Activated B cell treated with CpG ODN at 0.5 μM for 24 hours (primary cell): ENCODE measurements at regions of chr2 and their contacts with region 1.

Region 1: GRCh38 chr2:105802587-105802986 is 57.9 kb downstream of the NCK2 start:
- DNase-seq: peak; percentile 41
- ATAC-seq: peak; percentile 87
- H3K4me3 Mint-ChIP-seq: peak overlapping the region; percentile 65
- H3K27ac Mint-ChIP-seq: peak overlapping the region; percentile 90
- H3K4me1 Mint-ChIP-seq: peaks cover 93% of the 10 kb centered on the region
- H3K27me3 Mint-ChIP-seq: no peaks in the 10 kb centered on the region
- CTCF ChIP-seq: no peak

Region 2: GRCh38 chr2:105789745-105790460 is 12.7 kb before region 1 on chr2:
- CTCF ChIA-PET with region 1: interaction called, 4 read pairs
- POLR2A ChIA-PET with region 1: interaction called, 10 read pairs
- intact Hi-C with region 1: loop called (anchors 1 kb)
- DNase-seq: no peak
- ATAC-seq: peak; percentile 81
- H3K4me3 Mint-ChIP-seq: peak overlapping the region; percentile 64
- H3K27ac Mint-ChIP-seq: peak overlapping the region; percentile 84
- H3K4me1 Mint-ChIP-seq: peaks cover 90% of the 10 kb centered on the region
- H3K27me3 Mint-ChIP-seq: no peaks in the 10 kb centered on the region
- CTCF ChIP-seq: no peak

Region 3: DNA sequence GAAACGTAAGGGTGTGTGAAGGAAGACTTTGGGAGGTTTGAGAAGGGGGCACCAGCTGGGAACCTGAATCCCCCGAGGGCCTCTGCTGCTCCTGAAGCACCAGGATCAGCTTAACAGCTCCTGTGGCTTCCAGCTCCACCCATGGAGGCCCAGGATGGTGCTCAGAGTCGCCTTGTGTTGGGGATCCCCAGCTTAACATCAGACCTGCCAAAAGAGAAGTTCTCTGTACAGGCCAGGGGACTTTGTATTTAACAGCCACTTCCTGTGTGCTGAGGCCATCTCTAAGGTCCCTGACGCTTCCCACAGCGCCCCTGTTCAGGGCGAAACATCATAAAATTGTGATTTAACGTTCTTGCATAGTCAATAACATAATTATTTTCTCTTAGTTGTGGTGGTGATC is 19.6 kb after region 1 on chr2:
- CTCF ChIA-PET with region 1: no interaction called
- POLR2A ChIA-PET with region 1: interaction called, 3 read pairs
- intact Hi-C with region 1: loop called (anchors 2 kb)
- DNase-seq: no peak
- ATAC-seq: peak; percentile 84
- H3K4me3 Mint-ChIP-seq: peak overlapping the region; percentile 4
- H3K27ac Mint-ChIP-seq: peak overlapping the region; percentile 70
- H3K4me1 Mint-ChIP-seq: peaks cover 59% of the 10 kb centered on the region
- H3K27me3 Mint-ChIP-seq: no peaks in the 10 kb centered on the region
- CTCF ChIP-seq: no peak

Region 4: DNA sequence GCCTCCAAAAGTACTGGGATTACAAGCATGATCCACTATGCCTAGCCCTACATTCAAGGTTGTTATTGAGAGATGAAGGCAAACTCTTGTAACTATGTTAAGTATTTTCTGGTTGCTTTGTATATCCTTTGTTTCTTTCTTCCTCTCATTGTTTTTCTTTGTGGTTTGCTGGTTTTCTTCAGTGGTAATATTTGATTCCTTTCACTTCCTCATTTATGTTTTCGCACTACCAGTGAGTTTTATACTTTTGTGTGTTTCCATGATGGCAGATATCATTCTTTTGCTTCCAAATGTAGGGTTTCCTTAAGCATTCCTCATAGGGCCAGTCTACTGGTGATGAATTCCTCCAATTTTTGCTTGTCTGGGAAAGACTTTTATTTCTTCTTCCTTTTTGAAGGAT is 32.3 kb after region 1 on chr2:
- CTCF ChIA-PET with region 1: no interaction called
- POLR2A ChIA-PET with region 1: no interaction called
- intact Hi-C with region 1: loop called (anchors 1 kb)
- DNase-seq: no peak
- ATAC-seq: peak; percentile 72
- H3K4me3 Mint-ChIP-seq: peak overlapping the region; percentile 56
- H3K27ac Mint-ChIP-seq: peak overlapping the region; percentile 82
- H3K4me1 Mint-ChIP-seq: peaks cover 75% of the 10 kb centered on the region
- H3K27me3 Mint-ChIP-seq: no peaks in the 10 kb centered on the region
- CTCF ChIP-seq: no peak

Region 5: DNA sequence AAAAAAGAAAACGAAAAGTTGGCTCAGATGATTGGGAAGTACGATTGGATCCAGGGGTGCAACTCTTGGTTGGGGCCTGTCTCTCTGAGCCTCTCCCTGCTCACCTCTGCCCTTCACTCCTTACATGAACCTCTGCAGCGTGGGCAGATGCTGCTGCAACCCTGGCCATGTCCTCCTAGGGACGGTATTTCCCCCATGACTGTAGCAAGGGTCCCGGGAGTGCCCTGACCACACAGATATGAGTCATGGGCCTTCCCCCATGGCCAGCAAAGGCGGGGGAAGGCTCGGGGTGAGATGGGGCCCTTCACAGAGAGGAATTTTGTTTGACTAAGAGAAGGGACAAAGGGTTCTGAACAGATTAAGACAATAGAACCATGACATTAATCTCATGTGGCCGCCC is 71.1 kb after region 1 on chr2:
- CTCF ChIA-PET with region 1: no interaction called
- POLR2A ChIA-PET with region 1: no interaction called
- intact Hi-C with region 1: loop called (anchors 2 kb)
- DNase-seq: peak; percentile 53
- ATAC-seq: peak; percentile 93
- H3K4me3 Mint-ChIP-seq: peak overlapping the region; percentile 59
- H3K27ac Mint-ChIP-seq: peak overlapping the region; percentile 75
- H3K4me1 Mint-ChIP-seq: peaks cover 92% of the 10 kb centered on the region
- H3K27me3 Mint-ChIP-seq: no peaks in the 10 kb centered on the region
- CTCF ChIP-seq: no peak

Region 6: DNA sequence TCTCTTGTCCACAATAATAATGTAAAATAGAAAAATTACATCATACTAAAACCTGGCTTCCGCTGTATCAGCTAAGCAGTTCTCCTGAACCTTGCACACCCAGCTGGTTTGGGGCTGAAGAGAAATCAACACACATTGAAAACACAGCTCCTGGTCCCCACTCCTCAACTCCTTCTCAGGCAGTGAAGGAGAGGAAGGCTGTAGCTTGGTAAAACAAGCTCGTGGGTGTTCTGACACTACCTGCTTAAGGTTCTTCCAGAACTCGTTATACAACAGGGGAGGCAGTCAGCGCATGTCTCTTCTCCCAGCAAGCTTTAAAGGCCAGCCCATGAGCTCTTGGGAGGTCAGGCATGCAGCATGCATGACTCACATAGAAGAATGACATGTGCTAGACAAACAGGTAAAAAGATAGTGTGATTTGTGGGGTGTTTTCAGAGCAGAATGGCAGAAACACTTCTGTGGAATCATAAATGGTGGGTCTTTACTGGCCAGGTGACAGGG is 322.4 kb after region 1 on chr2:
- CTCF ChIA-PET with region 1: no interaction called
- POLR2A ChIA-PET with region 1: no interaction called
- intact Hi-C with region 1: no loop called
- DNase-seq: no peak
- ATAC-seq: no peak
- H3K4me3 Mint-ChIP-seq: no peak overlapping the region
- H3K27ac Mint-ChIP-seq: no peak overlapping the region
- H3K4me1 Mint-ChIP-seq: peaks cover 9% of the 10 kb centered on the region
- H3K27me3 Mint-ChIP-seq: no peaks in the 10 kb centered on the region
- CTCF ChIP-seq: no peak